Adrenal gland (tissue), 19 donors: ENCODE measurements at regions of chr18 and their contacts with region 1.

Region 1: GRCh38 chr18:39835303-39836030 is 2119.6 kb upstream of the PIK3C3 start:
- DNase-seq: no peak
- H3K4me3 ChIP-seq: no peak overlapping the region
- H3K27ac ChIP-seq: no peak overlapping the region
- H3K4me1 ChIP-seq: no peaks in the 10 kb centered on the region
- H3K27me3 ChIP-seq: no peaks in the 10 kb centered on the region
- CTCF ChIP-seq: no peak
- POLR2A ChIP-seq: no peak

Region 2: GRCh38 chr18:39772155-39772919 is 63.1 kb before region 1 on chr18:
- intact Hi-C with region 1: loop called in 1 of 2 experiments (anchors 10 kb)
- DNase-seq: no peak
- H3K4me3 ChIP-seq: no peak overlapping the region
- H3K27ac ChIP-seq: no peak overlapping the region
- H3K4me1 ChIP-seq: no peaks in the 10 kb centered on the region
- H3K27me3 ChIP-seq: no peaks in the 10 kb centered on the region
- CTCF ChIP-seq: no peak
- POLR2A ChIP-seq: no peak

Region 3: DNA sequence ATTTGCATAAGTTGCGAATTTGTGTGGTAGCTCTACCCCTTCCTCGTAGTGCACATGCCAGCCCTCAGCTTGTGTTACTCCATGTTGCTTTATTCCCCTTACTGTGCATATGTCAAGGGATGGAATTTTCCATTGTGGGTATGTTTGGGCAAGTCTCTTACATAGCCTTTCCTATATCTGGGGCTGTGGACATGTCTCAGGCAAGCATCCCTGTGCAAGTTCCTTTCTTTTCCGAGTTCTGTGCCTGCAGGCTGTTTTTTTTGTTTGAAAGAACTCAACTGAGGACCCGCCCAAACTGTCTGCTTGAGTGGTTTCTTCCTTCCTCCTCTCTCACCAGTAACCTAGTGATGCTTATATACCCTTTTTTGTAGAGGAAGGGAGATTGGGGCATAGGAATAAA is 380.5 kb after region 1 on chr18:
- intact Hi-C with region 1: no loop called
- DNase-seq: no peak
- H3K4me3 ChIP-seq: no peak overlapping the region
- H3K27ac ChIP-seq: no peak overlapping the region
- H3K4me1 ChIP-seq: no peaks in the 10 kb centered on the region
- H3K27me3 ChIP-seq: no peaks in the 10 kb centered on the region
- CTCF ChIP-seq: no peak
- POLR2A ChIP-seq: no peak